Activated T-helper 1 cell treated with anti-CD3 and anti-CD28 coated beads, Interleukin-12 subunit alpha, Interleukin-12 subunit beta, Interleukin-2, Interleukin-4 antibody, amounts not matched to agents 30 ng/mL and 10 ng/mL and 1 ng/mL, durations not matched to agents 14 hours and 24 hours and 36 hours (primary cell): ENCODE measurements at regions of chr7 and their contacts with region 1.

Region 1: DNA sequence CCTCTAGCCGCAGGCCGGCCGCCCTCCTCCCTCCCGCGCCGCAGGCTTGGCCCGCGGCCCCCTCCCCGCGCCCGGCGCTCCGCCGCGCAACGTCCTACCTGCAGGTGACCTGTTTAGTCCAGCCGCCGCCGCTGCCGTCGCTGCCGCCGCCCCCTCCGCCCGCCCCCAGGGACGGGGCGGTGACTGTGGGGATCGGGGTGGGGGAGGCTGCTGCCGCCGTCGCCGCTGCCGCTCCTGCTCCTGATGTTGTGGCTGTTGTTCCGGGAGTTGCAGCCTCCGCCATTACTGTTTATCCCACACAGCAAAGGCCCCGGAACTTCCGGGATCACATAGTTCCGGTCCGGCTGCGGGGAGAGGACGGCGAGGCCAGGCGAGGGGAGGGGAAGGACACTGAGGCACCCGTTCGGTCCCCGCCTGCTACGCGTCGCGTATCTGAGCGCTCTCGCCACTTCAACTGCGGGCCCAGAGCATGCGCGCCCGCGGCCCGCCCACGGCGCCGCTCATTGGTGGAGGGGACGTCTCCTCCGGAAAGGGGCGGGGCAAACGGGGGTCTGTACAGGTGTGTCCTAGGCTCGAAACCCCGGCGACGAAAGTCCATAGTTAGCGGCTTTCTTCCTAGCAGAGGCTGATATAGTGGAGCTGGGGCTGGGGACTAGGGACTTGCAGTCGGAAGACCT is at the start of gene MKRN1:
- DNase-seq: peak; percentile 90
- H3K4me3 Mint-ChIP-seq: peak within 1 kb of the TSS; percentile 99
- H3K27ac Mint-ChIP-seq: peak within 1 kb of the TSS; percentile 99
- H3K4me1 Mint-ChIP-seq: peaks cover 29% of the 10 kb centered on the region
- H3K27me3 Mint-ChIP-seq: peaks cover 8% of the 10 kb centered on the region
- total RNA-seq, gene MKRN1: 61.7 and 72.2 TPM in 2 replicates

Region 2: DNA sequence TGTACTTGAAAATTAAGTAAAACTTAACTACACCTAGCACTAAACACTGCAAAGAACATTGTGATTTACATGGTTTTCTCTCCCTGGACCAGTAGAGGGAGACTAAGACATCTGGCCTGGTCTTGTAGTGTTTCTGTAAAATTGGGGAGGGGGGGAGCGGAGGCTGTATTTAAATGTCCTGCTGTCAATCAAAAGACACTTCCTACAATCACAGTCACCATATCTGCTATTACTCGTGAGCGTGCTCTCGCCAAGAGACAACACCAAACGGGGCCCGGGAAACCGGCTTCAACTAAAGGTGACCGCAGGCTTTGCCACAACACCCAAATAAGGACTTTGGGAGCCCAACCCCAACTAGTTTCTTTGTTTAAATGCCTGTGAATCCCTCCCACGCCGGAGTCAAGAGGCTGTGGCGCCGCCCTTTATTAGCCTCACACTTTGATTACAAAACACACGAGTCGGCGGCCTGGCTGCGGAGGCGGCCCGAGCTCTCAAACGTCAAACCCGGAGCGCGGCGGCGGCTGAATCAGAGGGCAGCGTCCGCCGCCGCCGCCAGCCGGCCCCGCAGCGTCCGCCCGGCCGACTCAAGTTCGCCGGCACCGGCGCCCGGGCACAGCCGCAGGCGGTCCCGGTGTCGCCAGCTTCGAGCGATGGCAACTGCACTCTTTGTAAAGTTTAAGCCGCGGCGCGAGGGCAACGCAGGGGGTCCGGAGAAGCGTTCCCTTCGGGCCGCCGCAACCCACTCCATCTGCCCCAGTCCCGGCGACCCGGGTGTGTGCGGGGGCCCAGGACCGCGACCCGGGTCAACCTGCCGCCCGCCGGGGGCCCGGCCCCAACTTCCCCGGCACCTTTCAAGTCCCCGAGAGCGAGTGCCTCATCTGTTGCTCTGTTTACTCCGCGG is 303.7 kb before region 1 on chr7:
- intact Hi-C with region 1: loop called (anchors 1 kb)
- DNase-seq: peak; percentile 88
- H3K4me3 Mint-ChIP-seq: peak overlapping the region; percentile 83
- H3K27ac Mint-ChIP-seq: peak overlapping the region; percentile 69
- H3K4me1 Mint-ChIP-seq: peaks cover 56% of the 10 kb centered on the region
- H3K27me3 Mint-ChIP-seq: peaks cover 6% of the 10 kb centered on the region

Region 3: GRCh38 chr7:140358412-140359051 is 120.7 kb before region 1 on chr7:
- intact Hi-C with region 1: loop called (anchors 2 kb)
- DNase-seq: peak; percentile 9
- H3K4me3 Mint-ChIP-seq: peak overlapping the region; percentile 63
- H3K27ac Mint-ChIP-seq: peak overlapping the region; percentile 98
- H3K4me1 Mint-ChIP-seq: peaks cover 30% of the 10 kb centered on the region
- H3K27me3 Mint-ChIP-seq: no peaks in the 10 kb centered on the region

Region 4: GRCh38 chr7:140494867-140495266 is 15.7 kb after region 1 on chr7:
- intact Hi-C with region 1: loop called (anchors 1 kb)
- DNase-seq: no peak
- H3K4me3 Mint-ChIP-seq: no peak overlapping the region
- H3K27ac Mint-ChIP-seq: no peak overlapping the region
- H3K4me1 Mint-ChIP-seq: no peaks in the 10 kb centered on the region
- H3K27me3 Mint-ChIP-seq: peaks cover 7% of the 10 kb centered on the region

Region 5: GRCh38 chr7:140646931-140647647 is 167.9 kb after region 1 on chr7:
- intact Hi-C with region 1: no loop called
- DNase-seq: no peak
- H3K4me3 Mint-ChIP-seq: no peak overlapping the region
- H3K27ac Mint-ChIP-seq: no peak overlapping the region
- H3K4me1 Mint-ChIP-seq: peaks cover 7% of the 10 kb centered on the region
- H3K27me3 Mint-ChIP-seq: peaks cover 46% of the 10 kb centered on the region

Region 6: GRCh38 chr7:140924019-140924820 is 445.0 kb after region 1 on chr7:
- intact Hi-C with region 1: loop called (anchors 1 kb)
- DNase-seq: peak; percentile 69
- H3K4me3 Mint-ChIP-seq: no peak overlapping the region
- H3K27ac Mint-ChIP-seq: no peak overlapping the region
- H3K4me1 Mint-ChIP-seq: peaks cover 11% of the 10 kb centered on the region
- H3K27me3 Mint-ChIP-seq: no peaks in the 10 kb centered on the region